A549 (cell line): ENCODE measurements at regions of chr22 and their contacts with region 1.

Region 1: GRCh38 chr22:38766076-38766777 is 10.4 kb upstream of the SUN2 start:
- DNase-seq: peak; percentile 82 to 90
- ATAC-seq: peak; percentile 90 to 91
- H3K4me3 ChIP-seq: no peak overlapping the region
- H3K27ac ChIP-seq: peak overlapping the region; percentile 17 to 76; a peak in 4 of 6 replicates
- H3K4me1 ChIP-seq: peaks cover 29% of the 10 kb centered on the region
- CTCF ChIP-seq: peak; percentile 71
- EP300 ChIP-seq: no peak
- POLR2A ChIP-seq: no peak
- RAD21 ChIP-seq: peak; percentile 52

Region 2: DNA sequence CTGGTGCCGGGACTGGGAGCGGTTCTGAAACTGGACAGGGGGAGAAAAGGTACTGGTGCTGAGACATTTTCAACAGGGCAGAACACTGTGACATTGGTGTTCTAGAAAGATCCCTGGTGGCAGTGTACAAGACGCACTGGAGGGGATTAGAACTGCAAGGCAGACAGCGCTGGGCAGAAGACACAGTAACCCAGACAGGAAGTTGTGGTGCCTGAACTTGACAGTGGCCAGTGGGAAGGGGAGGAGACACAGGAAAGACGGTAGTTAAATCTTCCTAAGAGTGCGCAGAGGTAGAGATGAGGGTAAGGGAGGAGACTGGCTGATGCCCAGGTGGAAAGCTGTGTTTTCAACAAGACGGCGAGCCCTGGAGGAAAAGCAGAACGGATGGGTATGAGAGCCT is 134.5 kb before region 1 on chr22:
- CTCF ChIA-PET with region 1: no interaction called
- POLR2A ChIA-PET with region 1: no interaction called
- DNase-seq: no peak
- ATAC-seq: no peak
- H3K4me3 ChIP-seq: no peak overlapping the region
- H3K27ac ChIP-seq: no peak overlapping the region
- H3K4me1 ChIP-seq: no peaks in the 10 kb centered on the region
- CTCF ChIP-seq: no peak
- EP300 ChIP-seq: no peak
- POLR2A ChIP-seq: no peak
- RAD21 ChIP-seq: no peak

Region 3: GRCh38 chr22:38700789-38701628 is 65.2 kb before region 1 on chr22 and contains the start of gene JOSD1:
- CTCF ChIA-PET with region 1: no interaction called
- POLR2A ChIA-PET with region 1: no interaction called
- DNase-seq: peak; percentile 64 to 95
- ATAC-seq: peak; percentile 12 to 60
- H3K4me3 ChIP-seq: peak within 1 kb of the TSS; percentile 88
- H3K27ac ChIP-seq: peak within 1 kb of the TSS; percentile 96 to 99
- H3K4me1 ChIP-seq: peaks cover 45% of the 10 kb centered on the region
- CTCF ChIP-seq: no peak
- EP300 ChIP-seq: 0 out of 5 replicates have a peak, but pooled peaks of 1 of the 2 experiments have one; percentile 11
- POLR2A ChIP-seq: peak; percentile 72
- RAD21 ChIP-seq: no peak
- polyA plus RNA-seq, gene JOSD1: 37.5 and 40.9 TPM in 2 replicates

Region 4: DNA sequence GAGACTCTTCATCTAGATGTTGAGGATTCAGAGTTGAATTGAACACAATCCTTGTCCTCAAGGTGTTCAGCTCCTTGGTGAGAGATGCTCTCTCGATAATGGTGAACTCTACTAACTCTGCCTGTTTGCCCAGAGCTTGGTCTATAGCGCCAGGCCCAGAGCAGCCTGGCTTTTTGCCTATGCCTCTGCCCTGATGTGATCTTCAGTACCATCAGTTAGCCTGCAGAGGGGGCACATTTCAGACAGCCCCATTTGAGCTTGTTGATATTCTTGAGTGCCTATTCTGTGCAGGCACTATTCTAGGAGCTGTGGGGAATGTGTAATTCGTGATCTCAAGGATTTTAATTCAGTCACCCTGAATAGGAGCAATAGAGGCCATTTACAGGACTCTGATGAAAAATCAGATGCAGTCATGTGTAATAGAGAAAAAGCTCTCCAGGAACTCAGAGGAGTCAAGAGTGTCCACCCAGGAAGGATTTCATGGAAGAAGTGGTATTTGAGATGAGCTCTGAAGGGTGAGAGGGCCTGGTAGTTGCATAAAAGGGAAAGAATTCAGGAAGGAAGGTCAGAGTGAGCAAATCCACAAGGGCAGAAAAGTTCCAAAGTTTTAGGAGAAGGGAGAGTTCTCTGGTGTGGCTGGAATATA is 41.2 kb before region 1 on chr22:
- CTCF ChIA-PET with region 1: interaction called, 11 read pairs
- POLR2A ChIA-PET with region 1: no interaction called
- DNase-seq: peak; percentile 49 to 57
- ATAC-seq: peak; percentile 81 to 90
- H3K4me3 ChIP-seq: no peak overlapping the region
- H3K27ac ChIP-seq: no peak overlapping the region
- H3K4me1 ChIP-seq: no peaks in the 10 kb centered on the region
- CTCF ChIP-seq: peak; percentile 34; the same call in 2 of the 3 replicates
- EP300 ChIP-seq: no peak
- POLR2A ChIP-seq: no peak
- RAD21 ChIP-seq: no peak

Region 5: GRCh38 chr22:38755911-38756532 is 10.2 kb before region 1 on chr22 and contains the start of gene SUN2:
- CTCF ChIA-PET with region 1: interaction called, 75 read pairs
- POLR2A ChIA-PET with region 1: no interaction called
- DNase-seq: peak; percentile 81 to 84
- ATAC-seq: peak; percentile 89 to 90
- H3K4me3 ChIP-seq: peak within 1 kb of the TSS; percentile 100
- H3K27ac ChIP-seq: peak within 1 kb of the TSS; percentile 99
- H3K4me1 ChIP-seq: peaks cover 22% of the 10 kb centered on the region
- CTCF ChIP-seq: no peak
- EP300 ChIP-seq: no peak
- POLR2A ChIP-seq: peak; percentile 8; the same call in 1 of the 2 replicates
- RAD21 ChIP-seq: no peak
- polyA plus RNA-seq, gene SUN2: 12.6 and 18.4 TPM in 2 replicates

Region 6: GRCh38 chr22:38788021-38788816 is 22.0 kb after region 1 on chr22:
- CTCF ChIA-PET with region 1: interaction called, 45 read pairs
- POLR2A ChIA-PET with region 1: no interaction called
- DNase-seq: peak in 1 of 2 experiments; percentile 49
- ATAC-seq: peak; percentile 66 to 85
- H3K4me3 ChIP-seq: no peak overlapping the region
- H3K27ac ChIP-seq: peak overlapping the region; percentile 55 to 68; a peak in 5 of 6 replicates
- H3K4me1 ChIP-seq: peaks cover 19% of the 10 kb centered on the region
- CTCF ChIP-seq: no peak
- EP300 ChIP-seq: no peak
- POLR2A ChIP-seq: no peak
- RAD21 ChIP-seq: no peak

Region 7: DNA sequence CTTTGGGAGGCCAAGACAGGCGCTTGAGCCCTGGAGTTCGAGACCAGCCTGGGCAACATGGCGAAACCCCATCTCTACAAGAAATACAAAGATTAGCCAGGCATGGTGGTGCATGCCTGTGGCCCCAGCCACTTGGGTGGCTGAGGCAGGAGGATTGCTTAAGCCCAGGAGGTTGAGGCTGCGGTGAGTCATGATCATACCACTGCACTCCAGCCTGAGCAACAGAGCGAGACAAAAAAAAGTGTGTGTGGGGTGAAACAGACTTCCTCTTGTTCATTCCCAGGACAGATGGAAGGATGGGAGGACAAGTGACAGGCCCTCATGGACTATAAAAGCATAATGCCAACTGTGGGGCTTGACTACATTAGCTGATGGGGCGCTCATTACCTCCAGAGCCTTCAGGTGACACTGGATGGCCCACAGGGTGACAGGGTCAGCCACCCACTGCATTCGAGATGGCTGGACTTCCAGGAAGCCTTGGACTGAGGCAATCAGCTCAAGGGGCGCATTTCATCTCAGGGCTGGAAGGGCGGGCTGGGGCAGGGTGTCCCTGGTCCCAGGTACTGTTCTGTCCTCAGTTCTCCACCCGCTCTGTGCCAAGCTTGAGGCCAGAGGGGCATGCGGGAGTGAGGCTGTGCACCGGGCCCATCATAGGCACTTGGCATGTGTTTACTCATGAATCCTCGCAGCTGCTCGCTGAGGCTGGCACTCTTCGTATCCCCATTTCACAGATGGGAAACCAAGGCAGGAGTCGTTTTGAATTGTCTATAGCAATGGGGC is 65.1 kb after region 1 on chr22:
- CTCF ChIA-PET with region 1: interaction called, 48 read pairs
- POLR2A ChIA-PET with region 1: no interaction called
- DNase-seq: peak in 1 of 2 experiments; percentile 59
- ATAC-seq: peak in 1 of 2 experiments; percentile 79; a peak in 3 of 6 replicates
- H3K4me3 ChIP-seq: no peak overlapping the region
- H3K27ac ChIP-seq: peak overlapping the region; percentile 82 to 90
- H3K4me1 ChIP-seq: peaks cover 48% of the 10 kb centered on the region
- CTCF ChIP-seq: no peak
- EP300 ChIP-seq: peak; percentile 33 to 40; a peak in 1 of 5 replicates
- POLR2A ChIP-seq: no peak
- RAD21 ChIP-seq: no peak

Region 8: GRCh38 chr22:38862375-38863329 is 96.4 kb after region 1 on chr22:
- CTCF ChIA-PET with region 1: interaction called, 112 read pairs
- POLR2A ChIA-PET with region 1: interaction called, 3 read pairs
- DNase-seq: no peak
- ATAC-seq: peak in 1 of 2 experiments; percentile 53; a peak in 3 of 6 replicates
- H3K4me3 ChIP-seq: no peak overlapping the region
- H3K27ac ChIP-seq: no peak overlapping the region
- H3K4me1 ChIP-seq: no peaks in the 10 kb centered on the region; the same call in 2 of the 3 replicates
- CTCF ChIP-seq: no peak
- EP300 ChIP-seq: no peak
- POLR2A ChIP-seq: no peak
- RAD21 ChIP-seq: no peak

Region 9: GRCh38 chr22:38927033-38927781 is 161.0 kb after region 1 on chr22:
- CTCF ChIA-PET with region 1: interaction called, 26 read pairs
- POLR2A ChIA-PET with region 1: no interaction called
- DNase-seq: peak; percentile 82 to 84
- ATAC-seq: peak; percentile 90
- H3K4me3 ChIP-seq: peak overlapping the region; percentile 46
- H3K27ac ChIP-seq: peak overlapping the region; percentile 72 to 96
- H3K4me1 ChIP-seq: peaks cover 23% of the 10 kb centered on the region
- CTCF ChIP-seq: peak; percentile 86
- EP300 ChIP-seq: no peak
- POLR2A ChIP-seq: no peak
- RAD21 ChIP-seq: peak; percentile 53 to 68